ENCODE measurements at regions of chr13 and their contacts with region 1.

Region 1: GRCh38 chr13:42969558-42970172 is 22.4 kb downstream of the EPSTI1 start:
- DNase-seq: peak; percentile 84
- H3K4me3 Mint-ChIP-seq: no peak overlapping the region
- H3K27ac Mint-ChIP-seq: no peak overlapping the region
- H3K4me1 Mint-ChIP-seq: peaks cover 17% of the 10 kb centered on the region
- H3K27me3 Mint-ChIP-seq: no peaks in the 10 kb centered on the region

Region 2: DNA sequence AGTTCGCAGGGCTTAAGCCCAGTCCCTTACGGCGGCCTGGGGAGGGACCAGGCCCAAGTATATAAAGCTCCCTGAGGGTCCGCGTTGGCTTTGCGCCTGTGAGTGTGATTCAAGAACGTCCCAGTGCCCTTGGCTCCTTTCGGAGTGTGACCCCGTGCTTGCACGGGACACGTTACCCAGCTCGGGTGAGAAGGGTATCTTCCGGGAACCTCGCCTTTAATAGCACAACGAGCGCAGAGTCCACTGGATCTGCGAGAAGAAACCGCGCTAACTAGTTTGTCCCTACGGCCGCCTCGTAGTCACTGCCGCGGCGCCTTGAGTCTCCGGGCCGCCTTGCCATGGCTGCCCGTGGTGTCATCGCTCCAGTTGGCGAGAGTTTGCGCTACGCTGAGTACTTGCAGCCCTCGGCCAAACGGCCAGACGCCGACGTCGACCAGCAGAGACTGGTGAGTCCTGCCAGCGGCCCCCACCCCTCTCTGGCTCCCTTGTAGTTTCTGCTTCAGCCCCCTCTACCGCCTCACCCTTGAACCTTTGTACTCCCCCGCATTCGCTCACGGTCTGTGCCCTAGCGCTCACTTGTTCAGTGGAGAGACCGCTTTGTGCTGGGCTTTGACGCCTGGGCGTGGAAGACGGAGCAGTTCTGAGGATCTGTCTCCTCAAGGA is 53.8 kb after region 1 on chr13 and contains the start of gene DNAJC15:
- CTCF ChIA-PET with region 1: interaction called, 11 read pairs
- POLR2A ChIA-PET with region 1: interaction called, 3 read pairs
- intact Hi-C with region 1: loop called (anchors 1 kb)
- DNase-seq: peak; percentile 89
- H3K4me3 Mint-ChIP-seq: peak within 1 kb of the TSS; percentile 97
- H3K27ac Mint-ChIP-seq: peak within 1 kb of the TSS; percentile 93
- H3K4me1 Mint-ChIP-seq: peaks cover 30% of the 10 kb centered on the region
- H3K27me3 Mint-ChIP-seq: no peaks in the 10 kb centered on the region
- total RNA-seq, gene DNAJC15: 16.4 to 17.4 TPM

Region 3: GRCh38 chr13:43074824-43075510 is 105.3 kb after region 1 on chr13:
- CTCF ChIA-PET with region 1: interaction called, 7 read pairs
- POLR2A ChIA-PET with region 1: no interaction called
- intact Hi-C with region 1: loop called (anchors 5 kb)
- DNase-seq: peak; percentile 46
- H3K4me3 Mint-ChIP-seq: no peak overlapping the region
- H3K27ac Mint-ChIP-seq: no peak overlapping the region
- H3K4me1 Mint-ChIP-seq: peaks cover 54% of the 10 kb centered on the region
- H3K27me3 Mint-ChIP-seq: no peaks in the 10 kb centered on the region

Region 4: DNA sequence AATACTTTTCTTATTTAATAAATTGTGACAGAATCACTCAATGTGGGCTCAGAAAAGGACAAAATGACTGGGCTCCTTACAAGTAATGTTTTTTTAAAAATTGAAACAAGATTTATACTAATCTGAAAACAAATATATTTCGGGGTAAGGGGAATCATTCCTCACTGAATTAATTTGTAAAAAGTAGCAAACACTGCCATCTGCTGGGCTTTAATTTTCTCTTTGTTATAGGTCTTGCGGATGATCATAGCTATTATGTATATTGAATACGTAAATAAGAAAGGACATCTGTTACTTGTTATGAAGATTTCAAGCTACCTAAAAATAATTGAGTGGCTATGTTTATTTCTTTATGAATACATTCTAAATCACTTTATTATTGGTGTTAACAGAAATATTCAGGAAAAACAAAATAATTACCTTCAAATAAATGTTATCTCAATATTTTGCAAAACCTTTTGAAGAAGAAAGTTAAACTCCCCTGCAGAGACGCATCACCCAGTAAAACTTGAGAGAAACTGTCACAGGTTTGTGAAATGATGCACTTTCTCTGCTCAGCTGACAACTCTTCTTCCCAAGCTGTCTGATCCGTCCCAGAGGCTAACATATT is 834.9 kb after region 1 on chr13:
- CTCF ChIA-PET with region 1: interaction called, 35 read pairs
- POLR2A ChIA-PET with region 1: no interaction called
- intact Hi-C with region 1: loop called (anchors 1 kb)
- DNase-seq: no peak
- H3K4me3 Mint-ChIP-seq: no peak overlapping the region
- H3K27ac Mint-ChIP-seq: no peak overlapping the region
- H3K4me1 Mint-ChIP-seq: peaks cover 13% of the 10 kb centered on the region
- H3K27me3 Mint-ChIP-seq: peaks cover 26% of the 10 kb centered on the region

Measured in activated CD4-positive, alpha-beta memory T cell treated with anti-CD3 and anti-CD28 coated beads for 36 hours (primary cell).